ENCODE measurements at regions of chr10 and their contacts with region 1.

Region 1: GRCh38 chr10:71708301-71708703 is 11.3 kb downstream of the C10orf105 start:
- DNase-seq: peak; percentile 84
- ATAC-seq: peak; percentile 70

Region 2: DNA sequence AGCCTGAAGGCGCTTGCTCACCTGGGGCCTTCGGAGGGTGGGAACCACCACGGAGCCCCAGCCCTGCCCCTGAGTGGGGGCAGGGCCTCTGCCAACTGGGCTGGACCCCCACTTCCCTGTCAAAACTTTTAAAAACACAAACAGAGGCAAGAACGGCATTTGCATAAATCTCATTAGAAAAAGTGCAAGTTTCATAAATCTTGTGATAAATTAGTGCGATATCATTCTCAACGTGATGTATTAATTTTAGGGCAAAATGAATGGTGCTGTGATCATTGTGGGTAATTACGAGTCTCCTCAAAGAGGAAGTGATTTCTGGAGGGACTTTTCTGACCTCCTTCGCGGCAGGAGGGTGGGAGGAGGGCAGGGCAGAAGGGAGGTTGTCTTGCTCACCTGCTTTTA is 213.3 kb before region 1 on chr10:
- intact Hi-C with region 1: loop called (anchors 10 kb)
- DNase-seq: no peak
- ATAC-seq: no peak

Region 3: DNA sequence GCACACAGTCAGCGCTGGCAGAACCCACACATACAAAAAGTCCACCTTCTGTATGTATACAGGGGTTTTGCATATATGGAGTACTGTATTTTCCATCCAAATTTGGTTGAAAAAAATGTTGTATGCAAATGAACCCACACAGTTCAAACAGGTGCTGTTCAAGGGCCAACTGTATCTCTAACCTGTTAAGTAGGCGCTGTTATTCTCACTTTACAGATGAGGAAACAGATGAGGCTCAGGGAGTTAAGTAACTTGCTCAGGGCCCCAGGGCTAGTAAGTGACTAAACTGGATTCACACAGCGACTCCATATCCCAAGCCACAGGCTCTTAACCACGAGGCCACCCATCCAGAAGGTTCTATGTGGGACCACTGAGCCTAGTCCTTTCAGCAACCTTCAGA is 58.7 kb before region 1 on chr10:
- intact Hi-C with region 1: no loop called
- DNase-seq: no peak
- ATAC-seq: no peak

Region 4: GRCh38 chr10:71812016-71812912 is 104.0 kb after region 1 on chr10:
- intact Hi-C with region 1: no loop called
- DNase-seq: peak; percentile 83
- ATAC-seq: peak; percentile 85

Region 5: GRCh38 chr10:71998840-71999194 is 290.5 kb after region 1 on chr10:
- intact Hi-C with region 1: no loop called
- DNase-seq: peak; percentile 68
- ATAC-seq: peak; percentile 64

Region 6: DNA sequence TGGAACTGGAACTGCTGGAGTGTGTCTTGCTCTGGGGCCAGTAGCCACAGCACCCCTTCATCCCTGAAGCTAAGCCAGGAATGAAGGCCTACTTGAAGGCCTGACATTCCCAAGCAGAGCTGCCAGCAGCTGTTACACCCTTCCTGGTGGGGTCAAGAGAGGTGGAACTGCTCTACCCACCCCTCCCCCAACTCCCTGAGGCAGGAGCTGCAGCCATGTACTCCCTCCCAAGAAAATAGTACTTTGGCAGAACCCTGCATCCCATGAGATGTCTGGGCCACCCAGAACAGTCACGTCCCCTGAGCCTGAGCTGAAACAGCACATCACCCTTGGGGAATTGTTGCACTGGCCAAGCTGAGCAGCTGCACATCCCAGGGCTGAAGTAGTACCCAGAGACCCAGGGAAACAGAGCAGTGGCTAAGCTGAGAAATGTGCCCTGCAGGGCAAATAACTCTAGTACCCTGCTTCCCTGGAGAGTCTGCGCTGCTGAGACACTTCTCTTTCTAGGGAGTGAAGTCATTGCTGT is 1309.7 kb after region 1 on chr10:
- intact Hi-C with region 1: no loop called
- DNase-seq: no peak
- ATAC-seq: peak; percentile 83

Measured in Right ventricle myocardium superior (tissue), 1 donor.